ENCODE measurements at regions of chr16 and their contacts with region 1.

Region 1: GRCh38 chr16:22190776-22191531 is 15.1 kb upstream of the EEF2K start:
- ATAC-seq: peak; percentile 54 to 74 (median 72)
- H3K4me3 ChIP-seq: peak overlapping the region; percentile 49 to 80 (median 54)
- H3K27ac ChIP-seq: peak overlapping the region; percentile 94 to 95
- H3K4me1 ChIP-seq: peaks cover 10 to 20% of the 10 kb centered on the region in 2 donors

Region 2: DNA sequence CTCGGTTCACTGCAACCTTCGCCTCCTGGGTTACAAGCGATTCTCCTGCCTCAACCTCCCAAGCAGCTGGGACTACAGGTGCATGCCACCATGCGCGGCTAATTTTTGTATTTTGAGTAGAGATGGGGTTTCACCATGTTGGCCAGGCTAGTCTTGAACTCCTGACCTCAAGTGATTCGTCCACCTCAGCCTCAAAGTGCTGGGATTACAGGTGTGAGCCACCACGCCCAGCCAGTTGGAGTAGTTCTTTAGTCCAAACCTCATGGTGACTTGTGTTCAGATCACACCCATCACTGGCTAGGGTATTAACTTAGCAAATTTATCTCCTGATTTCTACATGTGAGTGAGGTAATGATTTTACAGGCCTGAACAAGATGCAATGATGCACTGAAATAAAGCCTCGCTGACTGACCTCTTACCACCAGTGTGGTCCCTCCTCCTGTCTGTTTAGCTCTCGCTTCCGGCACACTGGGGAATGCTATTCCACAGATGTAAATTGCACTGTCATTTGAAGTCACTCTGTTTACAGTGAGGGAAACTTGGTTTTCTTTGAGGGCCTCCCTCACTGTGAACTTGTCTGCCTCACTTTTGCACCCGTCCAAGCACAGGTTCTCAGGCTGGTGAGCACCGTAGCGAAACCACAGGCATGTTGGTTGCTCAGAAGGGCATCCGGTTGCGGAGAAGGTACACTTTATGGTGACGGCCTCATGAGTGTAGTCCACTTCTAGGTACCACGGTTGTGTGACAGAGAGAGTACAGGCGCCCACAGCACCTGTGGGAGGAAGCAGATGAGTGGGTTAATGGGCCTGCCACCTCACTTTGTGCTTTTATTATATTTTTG is 544.0 kb before region 1 on chr16:
- in situ Hi-C with region 1: no loop called
- ATAC-seq: no peak
- H3K4me3 ChIP-seq: no peak overlapping the region
- H3K27ac ChIP-seq: no peak overlapping the region
- H3K4me1 ChIP-seq: no peaks in the 10 kb centered on the region

Region 3: GRCh38 chr16:22001591-22001990 is 189.4 kb before region 1 on chr16:
- in situ Hi-C with region 1: loop called in 3 of 9 experiments (anchors 5 to 25 kb)
- ATAC-seq: peak in 2 of 8 experiments; percentile 37
- H3K4me3 ChIP-seq: no peak overlapping the region
- H3K27ac ChIP-seq: no peak overlapping the region
- H3K4me1 ChIP-seq: peaks cover 16 to 17% of the 10 kb centered on the region in 2 donors

Region 4: DNA sequence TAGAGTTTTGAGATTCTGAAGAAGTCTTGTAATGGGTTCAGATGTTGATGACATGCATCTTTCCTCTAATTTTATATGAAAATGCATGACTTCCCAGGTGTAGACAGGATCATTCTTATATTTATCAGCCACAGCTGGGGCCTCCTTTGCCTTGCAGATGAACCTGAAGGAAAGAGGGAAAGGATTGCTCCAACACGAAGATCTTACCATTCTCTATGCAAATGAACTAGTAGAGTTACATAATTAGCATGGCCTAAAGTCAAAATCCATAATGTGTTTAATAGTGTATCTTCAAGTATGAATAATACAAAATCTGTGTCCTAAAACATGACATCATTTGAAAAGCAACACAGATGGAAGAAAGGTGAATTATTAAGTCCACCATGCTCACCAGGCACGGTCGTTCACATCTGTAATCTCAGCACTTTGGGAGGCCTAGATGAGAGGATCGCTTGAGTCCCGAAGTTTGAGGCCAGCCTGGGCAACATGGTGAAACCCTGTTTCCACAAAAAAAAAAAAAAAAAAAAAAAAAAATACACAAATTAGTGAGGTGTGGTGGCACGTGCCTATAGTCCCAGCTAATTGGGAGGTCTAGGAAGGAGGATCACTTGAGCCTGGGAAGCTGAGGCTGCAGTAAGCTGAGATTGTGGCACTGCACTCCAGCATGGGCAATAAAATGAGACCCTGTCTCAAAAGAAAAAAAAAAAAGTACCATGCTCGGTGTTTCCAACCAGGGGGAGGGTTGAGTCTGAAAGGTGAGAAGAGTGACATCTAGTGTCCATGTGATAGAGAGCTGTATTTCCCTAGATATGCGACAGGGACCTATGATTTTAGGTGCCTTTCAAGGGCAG is 92.3 kb before region 1 on chr16:
- in situ Hi-C with region 1: loop called in 1 of 9 experiments (anchors 10 kb)
- ATAC-seq: peak; percentile 70 to 96 (median 80)
- H3K4me3 ChIP-seq: no peak overlapping the region
- H3K27ac ChIP-seq: no peak overlapping the region
- H3K4me1 ChIP-seq: peaks cover 0 to 8% of the 10 kb centered on the region in 2 donors

Measured in motor neuron (in vitro differentiated cells).